ENCODE measurements at regions of chr4 and their contacts with region 1.

Region 1: GRCh38 chr4:2934813-2935761 is 28.1 kb downstream of the NOP14 start:
- DNase-seq: peak; percentile 98
- ATAC-seq: peak; percentile 34
- H3K4me3 Mint-ChIP-seq: peak overlapping the region; percentile 90
- H3K27ac Mint-ChIP-seq: peak overlapping the region; percentile 95
- H3K4me1 Mint-ChIP-seq: peaks cover 53% of the 10 kb centered on the region
- H3K27me3 Mint-ChIP-seq: no peaks in the 10 kb centered on the region

Region 2: GRCh38 chr4:1721004-1721665 is 1214.0 kb before region 1 on chr4 and contains the starts of genes TACC3 and TMEM129:
- CTCF ChIA-PET with region 1: no interaction called
- POLR2A ChIA-PET with region 1: no interaction called
- intact Hi-C with region 1: loop called in 1 of 2 experiments (anchors 5 kb)
- DNase-seq: peak; percentile 96
- ATAC-seq: peak; percentile 81
- H3K4me3 Mint-ChIP-seq: peak within 1 kb of the TSS; percentile 96
- H3K27ac Mint-ChIP-seq: peak within 1 kb of the TSS; percentile 99
- H3K4me1 Mint-ChIP-seq: peaks cover 52% of the 10 kb centered on the region
- H3K27me3 Mint-ChIP-seq: no peaks in the 10 kb centered on the region
- total RNA-seq, gene TACC3: 197 to 206 TPM
- total RNA-seq, gene TMEM129: 13.7 to 14.6 TPM

Region 3: DNA sequence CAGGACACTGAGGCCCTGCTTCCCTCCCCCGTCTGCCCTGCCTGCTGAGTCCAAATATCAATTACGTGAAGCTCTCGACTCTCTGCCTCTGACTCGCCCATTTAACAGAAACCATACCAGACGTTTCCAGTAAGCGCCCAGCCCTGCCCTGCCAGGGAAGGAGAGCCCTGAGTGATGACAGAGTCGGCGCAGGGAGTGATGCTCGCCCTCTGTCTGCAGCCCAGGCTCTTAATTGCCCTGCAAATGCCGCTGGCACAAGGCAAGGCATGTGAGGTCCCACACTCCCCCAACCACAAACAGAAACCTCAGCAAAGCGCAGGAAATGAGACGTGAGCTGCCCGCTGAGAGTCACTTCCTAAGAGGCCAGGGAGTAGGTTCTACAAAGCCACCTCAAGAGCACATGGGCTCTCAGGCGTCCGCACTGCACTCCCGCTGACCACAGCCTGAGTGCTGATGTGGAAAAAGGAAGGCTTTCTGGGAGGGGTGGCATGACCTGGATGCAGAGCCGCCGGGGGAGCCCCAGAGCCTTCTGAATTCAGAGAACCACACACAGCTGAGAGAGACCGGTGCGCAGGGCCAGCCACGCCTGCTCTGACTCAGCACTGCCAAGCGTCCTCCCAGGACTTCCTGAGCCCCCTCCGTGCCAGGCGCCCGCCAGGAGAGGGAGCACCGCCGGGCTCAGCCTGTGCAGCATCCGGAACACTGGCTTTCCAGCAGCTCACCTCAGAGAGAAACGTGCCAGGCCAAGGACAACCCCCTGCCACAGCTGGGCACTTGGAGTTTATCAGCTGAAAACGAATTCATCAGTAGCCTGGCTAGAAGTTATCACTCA is 522.0 kb before region 1 on chr4:
- CTCF ChIA-PET with region 1: no interaction called
- POLR2A ChIA-PET with region 1: interaction called, 4 read pairs
- intact Hi-C with region 1: loop called in 1 of 2 experiments (anchors 2 kb)
- DNase-seq: peak; percentile 94
- ATAC-seq: peak; percentile 82
- H3K4me3 Mint-ChIP-seq: peak overlapping the region; percentile 70
- H3K27ac Mint-ChIP-seq: peak overlapping the region; percentile 97
- H3K4me1 Mint-ChIP-seq: peaks cover 69% of the 10 kb centered on the region
- H3K27me3 Mint-ChIP-seq: peaks cover 9% of the 10 kb centered on the region

Region 4: DNA sequence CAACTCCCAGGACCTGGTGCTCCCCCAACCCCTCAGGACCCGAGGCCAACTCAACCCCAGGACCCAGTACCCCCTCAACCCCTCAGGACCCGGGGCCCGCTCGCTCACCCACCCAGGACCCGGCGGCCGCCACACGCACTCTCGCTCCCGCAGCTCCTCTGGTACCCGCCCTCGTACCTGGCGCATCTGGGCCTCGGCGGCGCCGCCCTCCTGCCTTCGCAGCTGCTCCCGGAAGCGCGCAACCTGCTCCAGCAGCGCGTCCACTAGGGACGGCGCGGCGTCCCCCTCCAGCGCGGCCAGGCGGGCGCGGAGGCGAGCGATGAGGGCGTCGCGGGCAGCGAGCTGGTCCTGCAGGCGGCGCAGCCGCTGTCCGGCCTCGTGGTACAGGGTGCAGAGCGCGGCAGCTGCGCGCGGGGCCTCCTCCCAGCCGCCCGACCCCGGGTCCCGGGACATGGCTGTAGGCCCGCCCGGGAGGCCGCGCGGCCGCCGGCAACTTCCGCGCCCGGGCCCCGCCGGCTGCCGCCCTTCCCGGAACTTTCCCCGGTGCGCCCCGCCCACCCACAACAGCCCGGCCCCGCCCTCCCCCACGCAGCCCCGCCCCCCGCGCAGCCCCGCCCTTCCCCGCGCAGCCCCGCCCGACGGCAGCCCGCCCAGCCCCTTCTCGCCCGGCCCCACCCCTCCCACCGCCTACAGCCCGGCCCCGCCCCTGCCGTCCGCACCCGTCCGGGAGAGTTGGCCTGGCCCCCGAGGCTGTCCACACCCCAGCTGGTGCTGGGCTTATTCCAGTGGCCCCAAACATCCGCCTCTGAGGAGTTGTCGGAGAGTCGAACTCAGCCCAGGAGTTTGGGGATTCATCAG is 179.0 kb before region 1 on chr4 and contains the start of gene TNIP2:
- CTCF ChIA-PET with region 1: interaction called, 3 read pairs
- POLR2A ChIA-PET with region 1: no interaction called
- intact Hi-C with region 1: loop called (anchors 1 to 5 kb)
- DNase-seq: peak; percentile 91
- ATAC-seq: peak; percentile 78
- H3K4me3 Mint-ChIP-seq: peak within 1 kb of the TSS; percentile 79
- H3K27ac Mint-ChIP-seq: peak within 1 kb of the TSS; percentile 66
- H3K4me1 Mint-ChIP-seq: peaks cover 33% of the 10 kb centered on the region
- H3K27me3 Mint-ChIP-seq: no peaks in the 10 kb centered on the region
- total RNA-seq, gene TNIP2: 50.6 to 59.4 TPM

Region 5: DNA sequence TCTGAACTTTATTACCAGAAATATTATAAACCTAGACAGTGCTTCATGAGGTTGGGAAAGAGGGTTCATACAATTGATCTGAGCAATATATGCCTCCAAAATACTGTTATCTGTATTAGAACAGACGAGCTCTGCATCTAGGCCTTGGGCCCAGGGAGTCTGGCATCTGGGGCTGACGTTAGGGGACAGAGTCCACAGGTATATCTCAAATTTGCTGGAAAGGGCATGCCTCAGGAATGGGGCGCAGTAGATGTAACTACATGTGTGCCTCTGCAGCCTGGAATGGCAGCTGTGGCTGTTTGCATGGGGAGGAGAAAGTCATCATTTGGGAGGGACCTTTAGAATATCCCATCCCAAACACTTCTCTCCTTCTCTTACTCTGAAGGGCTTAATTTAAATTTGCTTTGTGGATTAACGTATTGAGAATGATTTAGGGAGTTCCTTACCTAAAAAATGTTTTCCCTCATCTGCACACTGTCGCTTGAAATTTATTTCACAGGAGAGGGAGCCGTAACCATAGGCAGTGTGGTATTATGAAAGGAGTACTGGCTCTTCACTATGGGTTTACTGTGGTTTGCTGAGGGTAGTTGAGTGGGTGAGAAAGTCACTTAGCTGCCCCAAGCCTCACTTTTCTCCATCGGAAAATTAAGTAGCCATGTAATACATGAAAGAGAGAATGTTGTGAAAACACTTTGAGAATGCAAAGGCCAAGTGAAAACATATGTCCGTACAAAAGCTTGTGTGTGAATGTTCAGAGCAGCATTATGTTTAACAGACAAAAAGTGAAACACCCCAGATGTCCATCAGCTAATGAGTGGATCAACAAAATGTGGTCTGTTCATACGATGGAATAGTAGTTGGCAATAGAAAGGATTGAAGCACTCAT is 85.6 kb before region 1 on chr4:
- CTCF ChIA-PET with region 1: interaction called, 3 read pairs
- POLR2A ChIA-PET with region 1: interaction called, 5 read pairs
- intact Hi-C with region 1: loop called in 1 of 2 experiments (anchors 5 kb)
- DNase-seq: no peak
- ATAC-seq: no peak
- H3K4me3 Mint-ChIP-seq: no peak overlapping the region
- H3K27ac Mint-ChIP-seq: peak overlapping the region; percentile 28
- H3K4me1 Mint-ChIP-seq: peaks cover 85% of the 10 kb centered on the region
- H3K27me3 Mint-ChIP-seq: no peaks in the 10 kb centered on the region

Region 6: DNA sequence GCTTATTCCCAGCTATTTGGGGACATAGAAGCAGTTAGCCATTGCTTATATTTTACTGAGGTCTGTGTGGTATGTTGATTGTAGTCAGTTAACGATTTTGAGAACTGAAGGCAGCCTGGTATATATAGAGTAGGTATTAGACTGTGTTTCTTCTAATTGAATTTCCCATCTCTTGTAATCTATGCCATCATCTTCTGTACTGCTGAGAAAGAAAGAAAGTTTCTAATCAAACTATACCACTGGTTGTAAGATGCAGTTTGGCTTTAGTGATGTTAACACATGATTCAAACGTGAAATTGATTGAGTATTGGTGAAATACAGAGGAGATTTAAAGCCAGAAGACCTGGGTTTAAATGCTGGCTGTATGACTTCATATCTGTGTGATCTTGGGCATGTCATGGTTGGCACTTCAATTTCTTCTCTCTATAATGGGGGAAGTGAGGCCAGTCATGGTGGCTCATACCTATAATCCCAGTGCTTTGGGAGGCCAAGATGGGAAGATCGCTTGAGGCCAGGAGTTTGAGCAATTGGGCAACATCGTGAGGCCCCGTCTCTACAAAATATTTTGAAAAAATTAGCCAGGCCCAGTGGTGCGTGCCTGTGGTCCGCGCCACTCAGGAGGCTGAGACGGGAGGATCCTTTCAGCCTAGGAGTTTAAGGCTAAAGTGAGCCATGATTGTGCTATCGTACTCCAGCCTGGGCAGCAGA is 151.0 kb after region 1 on chr4:
- CTCF ChIA-PET with region 1: no interaction called
- POLR2A ChIA-PET with region 1: no interaction called
- intact Hi-C with region 1: loop called in 1 of 2 experiments (anchors 1 kb)
- DNase-seq: no peak
- ATAC-seq: peak; percentile 50
- H3K4me3 Mint-ChIP-seq: peak overlapping the region; percentile 20
- H3K27ac Mint-ChIP-seq: peak overlapping the region; percentile 96
- H3K4me1 Mint-ChIP-seq: peaks cover 68% of the 10 kb centered on the region
- H3K27me3 Mint-ChIP-seq: no peaks in the 10 kb centered on the region

Measured in activated CD4-positive, alpha-beta T cell treated with anti-CD3 and anti-CD28 coated beads for 36 hours (primary cell).